ENCODE measurements at regions of chr22 and their contacts with region 1.

Region 1: DNA sequence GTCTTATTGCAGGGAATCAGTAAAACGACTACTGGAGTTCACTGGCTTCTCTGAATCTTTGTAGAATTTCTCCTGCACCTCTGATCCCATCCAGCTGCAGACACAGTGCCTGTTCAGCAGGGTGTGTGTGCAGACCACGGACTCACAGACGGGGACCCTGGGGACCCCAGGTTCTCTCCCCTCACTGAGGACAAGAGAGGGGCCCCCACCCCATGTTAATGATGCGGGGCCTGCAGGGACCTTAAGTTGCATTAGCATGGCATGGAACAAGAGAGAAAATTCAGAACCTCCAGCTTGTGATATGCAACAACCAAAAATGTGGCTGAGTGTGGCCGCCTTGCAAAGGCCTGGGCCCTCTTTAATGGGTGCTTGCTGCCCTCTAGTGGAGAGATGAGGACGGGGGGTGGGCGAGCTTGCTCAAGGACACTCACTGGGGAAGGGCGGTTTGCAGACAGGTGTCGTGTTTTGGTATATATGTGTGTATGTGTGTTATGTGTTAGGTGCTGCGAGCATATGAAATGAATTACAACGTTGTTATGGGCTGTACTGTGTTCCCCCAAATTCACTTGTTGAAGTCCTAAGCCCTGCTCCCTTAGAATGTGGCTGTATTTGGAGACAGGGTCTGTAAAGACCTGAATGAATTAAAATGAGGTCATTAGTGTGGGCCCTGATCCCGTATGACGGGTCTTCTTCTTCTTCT is 84.4 kb upstream of the SEPTIN5 start:
- DNase-seq: peak; percentile 43
- H3K4me3 ChIP-seq: no peak overlapping the region
- H3K27ac ChIP-seq: no peak overlapping the region
- H3K27me3 ChIP-seq: peaks cover 9% of the 10 kb centered on the region
- CTCF ChIP-seq: peak; percentile 94

Region 2: DNA sequence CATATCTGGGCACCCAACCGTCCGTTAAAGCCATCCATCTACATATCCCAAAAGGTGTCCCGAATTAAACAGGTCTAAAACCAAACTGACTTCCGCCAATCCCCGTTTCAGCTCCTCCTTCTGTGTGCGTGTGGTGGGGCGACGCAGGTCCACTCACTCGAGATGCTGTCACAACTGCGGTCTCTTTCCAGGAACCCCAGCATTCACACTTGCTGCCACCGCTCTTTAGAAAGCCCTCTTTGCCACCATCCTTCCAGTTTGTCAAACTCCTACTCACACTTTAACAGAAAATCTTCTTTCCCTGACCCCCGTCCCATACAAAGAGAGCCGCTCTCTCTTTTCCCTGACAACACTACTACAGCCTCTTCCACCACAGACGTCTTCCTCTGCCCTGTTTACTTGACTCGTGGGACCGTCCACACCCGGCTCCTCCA is 485.9 kb before region 1 on chr22:
- CTCF ChIA-PET with region 1: interaction called, 15 read pairs
- POLR2A ChIA-PET with region 1: no interaction called
- DNase-seq: no peak
- H3K4me3 ChIP-seq: peak overlapping the region; percentile 97
- H3K27ac ChIP-seq: peak overlapping the region; percentile 57
- H3K27me3 ChIP-seq: peaks cover 24% of the 10 kb centered on the region
- CTCF ChIP-seq: no peak

Region 3: DNA sequence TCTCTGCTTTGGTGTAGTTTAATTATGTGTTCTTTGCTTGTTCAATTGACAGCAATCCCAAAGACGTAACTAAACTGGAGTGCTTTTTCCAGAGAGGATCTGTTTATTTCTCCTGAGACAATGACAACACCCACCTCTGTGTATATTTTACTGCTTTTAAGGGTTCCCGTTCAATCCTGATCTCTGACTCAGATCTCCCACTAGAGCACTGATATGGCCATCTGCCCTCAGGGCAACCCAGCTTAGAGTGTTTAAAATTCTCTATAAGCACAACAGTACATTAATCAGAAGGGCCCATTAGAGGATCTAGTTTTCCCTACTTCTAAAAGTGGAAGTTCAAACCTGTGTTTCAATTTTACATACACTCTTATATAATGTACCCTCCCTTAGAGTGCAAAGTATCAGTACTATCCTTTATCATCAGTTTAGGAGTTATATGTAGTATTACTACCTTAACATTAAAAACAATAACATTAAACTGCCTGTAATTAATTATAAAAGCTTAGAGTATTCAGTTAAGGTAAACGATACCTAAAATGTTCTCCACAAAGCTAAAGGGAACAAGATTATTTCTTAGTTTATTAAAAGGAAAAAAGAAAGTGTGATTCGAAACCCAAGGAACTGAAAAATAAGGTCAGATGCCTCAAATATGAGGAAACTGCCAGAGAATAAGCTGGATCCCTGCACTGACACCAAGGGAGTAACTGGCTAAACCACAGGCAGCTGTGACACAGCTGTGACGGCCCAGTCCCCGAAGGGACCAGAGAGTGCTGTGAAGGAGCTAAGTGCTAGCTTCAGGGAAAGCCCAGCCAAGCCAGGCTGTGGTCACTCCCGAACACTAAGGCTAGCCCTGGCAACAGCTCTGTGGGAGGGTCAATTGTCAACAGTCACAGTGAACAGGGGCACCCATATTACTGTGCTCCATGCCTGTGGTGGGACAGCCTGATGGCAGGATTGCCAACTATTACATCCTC is 166.1 kb before region 1 on chr22:
- CTCF ChIA-PET with region 1: interaction called, 11 read pairs
- POLR2A ChIA-PET with region 1: no interaction called
- DNase-seq: peak; percentile 24
- H3K4me3 ChIP-seq: no peak overlapping the region
- H3K27ac ChIP-seq: peak overlapping the region; percentile 31
- H3K27me3 ChIP-seq: no peaks in the 10 kb centered on the region
- CTCF ChIP-seq: no peak

Region 4: DNA sequence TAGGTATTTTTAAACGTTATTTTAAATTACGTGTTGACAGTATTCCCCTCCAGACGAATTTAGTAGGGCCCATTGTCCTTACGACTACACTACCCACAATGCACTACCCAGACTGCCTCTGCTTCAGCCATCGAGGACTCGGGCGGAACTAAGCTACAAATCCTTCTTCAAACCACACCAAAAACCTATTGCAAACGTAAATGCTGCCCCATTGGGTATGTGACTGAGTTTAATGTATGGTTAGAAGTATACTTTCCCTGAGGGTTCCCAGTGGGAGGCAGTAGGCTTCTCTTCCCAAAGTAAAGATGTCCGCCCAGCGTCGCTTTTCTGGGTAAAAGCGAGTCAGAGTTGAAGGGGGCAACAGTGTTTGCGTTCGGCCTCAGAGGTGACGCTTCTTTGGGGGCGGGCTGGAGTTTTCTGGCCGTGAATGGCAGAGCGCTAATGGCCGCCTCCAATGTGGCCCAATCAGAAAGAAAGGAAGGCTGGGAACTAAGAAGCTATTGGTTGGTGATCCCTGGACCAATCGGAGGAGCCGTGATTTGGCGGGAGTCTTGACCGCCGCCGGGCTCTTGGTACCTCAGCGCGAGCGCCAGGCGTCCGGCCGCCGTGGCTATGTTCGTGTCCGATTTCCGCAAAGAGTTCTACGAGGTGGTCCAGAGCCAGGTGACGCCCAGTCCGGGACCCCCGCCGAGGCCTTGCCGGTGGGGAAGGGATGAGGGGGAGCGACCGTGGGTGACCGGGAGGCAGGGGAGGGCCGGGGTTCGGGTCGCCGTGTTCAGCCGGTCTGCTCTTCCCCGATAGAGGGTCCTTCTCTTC is 150.3 kb before region 1 on chr22 and contains the start of gene CDC45:
- CTCF ChIA-PET with region 1: interaction called, 26 read pairs
- POLR2A ChIA-PET with region 1: no interaction called
- DNase-seq: peak; percentile 96
- H3K4me3 ChIP-seq: peak within 1 kb of the TSS; percentile 98
- H3K27ac ChIP-seq: peak within 1 kb of the TSS; percentile 99
- H3K27me3 ChIP-seq: no peaks in the 10 kb centered on the region
- CTCF ChIP-seq: no peak
- polyA plus RNA-seq, gene CDC45: 8.3 and 9.3 TPM in 2 replicates

Region 5: DNA sequence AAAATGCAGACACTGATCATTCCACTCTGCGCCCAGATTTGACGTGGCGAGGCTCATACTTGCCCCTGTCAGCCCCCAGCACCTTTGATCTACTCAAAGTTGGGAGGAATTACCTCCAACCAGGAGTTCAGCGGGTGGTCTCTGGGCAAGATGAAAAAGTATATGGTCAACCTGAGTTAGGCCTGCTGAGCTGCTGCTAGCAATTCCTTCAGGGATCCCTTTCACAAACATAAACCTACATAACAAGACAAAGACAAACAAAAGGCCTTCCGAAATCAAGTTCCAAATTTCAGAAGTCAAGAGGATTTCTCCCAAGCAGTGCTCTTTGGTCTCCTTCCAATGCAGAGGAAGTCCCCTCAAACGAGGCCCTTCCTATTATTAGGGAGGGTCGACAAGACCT is 126.5 kb before region 1 on chr22:
- CTCF ChIA-PET with region 1: interaction called, 18 read pairs
- POLR2A ChIA-PET with region 1: no interaction called
- DNase-seq: no peak
- H3K4me3 ChIP-seq: no peak overlapping the region
- H3K27ac ChIP-seq: no peak overlapping the region
- H3K27me3 ChIP-seq: no peaks in the 10 kb centered on the region
- CTCF ChIP-seq: no peak